B cell (primary cell): ENCODE measurements at regions of chr3 and their contacts with region 1.

Region 1: DNA sequence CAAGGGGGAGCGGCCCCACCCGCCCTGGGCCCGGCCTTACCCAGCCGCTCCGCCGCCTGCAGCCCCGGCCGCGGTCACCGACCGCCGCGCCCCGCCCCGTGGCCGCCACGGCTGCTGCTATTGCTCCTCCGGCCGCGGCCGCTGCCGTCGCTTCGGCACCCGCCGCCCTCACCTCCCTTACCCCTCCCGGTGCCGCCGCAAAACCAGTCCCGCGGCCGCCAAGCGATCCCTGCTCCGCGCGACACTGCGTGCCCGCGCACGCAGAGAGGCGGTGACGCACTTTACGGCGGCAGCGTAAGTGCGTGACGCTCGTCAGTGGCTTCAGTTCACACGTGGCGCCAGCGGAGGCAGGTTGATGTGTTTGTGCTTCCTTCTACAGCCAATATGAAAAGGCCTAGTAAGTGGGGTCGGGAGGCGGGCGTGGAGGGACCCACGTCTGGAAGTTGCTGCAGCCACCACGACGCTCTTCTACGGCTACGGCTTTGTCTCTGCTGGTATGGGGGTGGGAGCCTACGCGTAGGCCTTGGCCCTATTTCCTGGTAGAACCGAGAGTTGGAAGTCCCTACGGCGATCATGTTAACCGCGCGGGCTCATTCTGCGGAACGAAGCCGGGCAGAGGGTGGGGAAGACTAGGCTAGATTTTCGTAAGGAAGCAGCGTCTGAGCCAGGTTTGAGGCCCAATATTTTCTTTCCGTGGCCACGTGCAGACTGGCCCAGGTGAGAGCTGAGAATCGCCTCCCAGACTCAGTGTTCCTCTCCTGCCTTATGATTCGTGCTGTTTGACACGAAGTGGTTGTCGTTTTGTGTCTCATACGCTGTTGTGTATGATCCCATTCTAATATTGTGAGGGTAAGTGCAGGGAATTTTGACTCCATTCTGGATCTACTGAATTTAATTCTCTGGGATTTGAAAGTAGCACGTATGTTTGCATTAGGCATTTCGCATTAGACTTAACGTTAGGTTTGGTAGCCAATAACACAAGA is at the starts of genes GNL3 and PBRM1:
- DNase-seq: peak; percentile 98
- ATAC-seq: peak; percentile 86
- H3K4me3 ChIP-seq: peak within 1 kb of the TSS; percentile 67 to 90 (median 86)
- H3K4me3 Mint-ChIP-seq: peak within 1 kb of the TSS; percentile 99
- H3K27ac ChIP-seq: peak within 1 kb of the TSS; percentile 92 to 97
- H3K27ac Mint-ChIP-seq: peak within 1 kb of the TSS; percentile 100
- H3K4me1 ChIP-seq: peaks cover 20 to 21% of the 10 kb centered on the region in 2 donors
- H3K4me1 Mint-ChIP-seq: peaks cover 36% of the 10 kb centered on the region
- H3K27me3 ChIP-seq: no peaks in the 10 kb centered on the region
- H3K27me3 Mint-ChIP-seq: no peaks in the 10 kb centered on the region
- CTCF ChIP-seq: no peak
- total RNA-seq, gene GNL3: 67.3 and 68.5 TPM in 2 replicates
- total RNA-seq, gene PBRM1: 81.1 and 85.9 TPM in 2 replicates

Region 2: DNA sequence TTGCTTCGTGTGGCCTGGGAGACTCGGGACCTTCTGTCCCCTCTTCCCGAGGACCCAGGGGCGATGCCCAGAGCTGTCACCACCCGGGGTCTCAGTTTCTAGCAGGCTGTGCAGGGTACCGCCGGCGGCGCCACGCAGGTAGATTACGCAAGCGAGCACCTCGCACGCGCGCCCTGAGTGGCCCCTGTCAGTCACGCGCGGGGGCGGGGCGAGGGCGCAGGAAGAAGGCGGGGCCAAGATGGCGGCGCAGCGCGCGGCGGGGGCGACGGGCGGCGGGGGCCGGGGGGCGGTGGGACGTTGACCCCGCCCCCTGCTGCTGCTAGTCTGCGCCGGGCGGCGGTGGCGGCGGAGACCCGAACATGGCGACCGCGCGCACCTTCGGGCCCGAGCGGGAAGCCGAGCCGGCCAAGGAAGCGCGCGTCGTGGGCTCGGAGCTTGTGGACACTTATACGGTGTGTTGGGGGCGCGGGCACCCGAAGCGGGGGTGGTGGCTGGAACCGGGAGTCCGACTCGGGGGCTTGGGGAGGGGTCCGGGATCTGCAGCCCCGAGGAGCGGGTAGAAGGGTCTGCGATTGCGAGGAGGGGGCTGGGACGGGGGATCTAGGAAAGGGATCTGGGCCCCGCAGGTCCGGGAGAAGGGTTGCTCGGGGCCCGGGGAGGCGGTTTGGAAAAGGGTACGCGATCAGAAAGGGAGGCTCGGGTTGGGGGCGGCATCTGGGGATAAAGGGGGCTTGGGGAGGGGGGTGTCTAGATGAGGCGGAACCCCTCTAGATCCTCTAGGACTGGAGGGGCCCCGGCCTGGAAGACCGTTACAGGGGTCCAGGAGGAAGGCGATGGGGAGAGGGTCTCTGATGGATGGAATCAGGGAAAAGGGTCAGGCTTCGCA is 230.5 kb before region 1 on chr3 and contains the start of gene NISCH:
- CTCF ChIA-PET with region 1: no interaction called
- POLR2A ChIA-PET with region 1: no interaction called
- intact Hi-C with region 1: loop called (anchors 5 kb)
- DNase-seq: peak; percentile 94
- ATAC-seq: peak; percentile 97
- H3K4me3 ChIP-seq: peak within 1 kb of the TSS; percentile 50 to 81 (median 70)
- H3K4me3 Mint-ChIP-seq: peak within 1 kb of the TSS; percentile 88
- H3K27ac ChIP-seq: peak within 1 kb of the TSS; percentile 88 to 92
- H3K27ac Mint-ChIP-seq: peak within 1 kb of the TSS; percentile 94
- H3K4me1 ChIP-seq: peaks cover 16 to 27% of the 10 kb centered on the region in 2 donors
- H3K4me1 Mint-ChIP-seq: peaks cover 38% of the 10 kb centered on the region
- H3K27me3 ChIP-seq: no peaks in the 10 kb centered on the region
- H3K27me3 Mint-ChIP-seq: no peaks in the 10 kb centered on the region
- CTCF ChIP-seq: no peak
- total RNA-seq, gene NISCH: 161 and 169 TPM in 2 replicates

Region 3: GRCh38 chr3:52770496-52771333 is 84.7 kb after region 1 on chr3 and contains the start of gene NEK4:
- CTCF ChIA-PET with region 1: no interaction called
- POLR2A ChIA-PET with region 1: no interaction called
- intact Hi-C with region 1: loop called (anchors 1 kb)
- DNase-seq: peak; percentile 93
- ATAC-seq: peak; percentile 96
- H3K4me3 ChIP-seq: peak within 1 kb of the TSS; percentile 57 to 85 (median 70)
- H3K4me3 Mint-ChIP-seq: peak within 1 kb of the TSS; percentile 99
- H3K27ac ChIP-seq: peak within 1 kb of the TSS; percentile 71 to 89
- H3K27ac Mint-ChIP-seq: peak within 1 kb of the TSS; percentile 98
- H3K4me1 ChIP-seq: peaks cover 9 to 12% of the 10 kb centered on the region in 2 donors
- H3K4me1 Mint-ChIP-seq: peaks cover 18% of the 10 kb centered on the region
- H3K27me3 ChIP-seq: no peaks in the 10 kb centered on the region
- H3K27me3 Mint-ChIP-seq: no peaks in the 10 kb centered on the region
- CTCF ChIP-seq: peak; percentile 27
- total RNA-seq, gene NEK4: 33.8 and 38.4 TPM in 2 replicates

Region 4: GRCh38 chr3:53347261-53348064 is 661.5 kb after region 1 on chr3 and contains the start of gene DCP1A:
- CTCF ChIA-PET with region 1: no interaction called
- POLR2A ChIA-PET with region 1: no interaction called
- intact Hi-C with region 1: loop called (anchors 5 kb)
- DNase-seq: peak; percentile 97
- ATAC-seq: peak; percentile 93
- H3K4me3 ChIP-seq: peak within 1 kb of the TSS; percentile 86 to 99 (median 96)
- H3K4me3 Mint-ChIP-seq: peak within 1 kb of the TSS; percentile 100
- H3K27ac ChIP-seq: peak within 1 kb of the TSS; percentile 89 to 95
- H3K27ac Mint-ChIP-seq: peak within 1 kb of the TSS; percentile 99
- H3K4me1 ChIP-seq: peaks cover 11 to 15% of the 10 kb centered on the region in 2 donors
- H3K4me1 Mint-ChIP-seq: peaks cover 23% of the 10 kb centered on the region
- H3K27me3 ChIP-seq: no peaks in the 10 kb centered on the region
- H3K27me3 Mint-ChIP-seq: no peaks in the 10 kb centered on the region
- CTCF ChIP-seq: no peak
- total RNA-seq, gene DCP1A: 44.6 and 47.7 TPM in 2 replicates